Calu3 (cell line): ENCODE measurements at regions of chr3 and their contacts with region 1.

Region 1: GRCh38 chr3:112293368-112294321 is at the start of gene SLC9C1:
- DNase-seq: peak; percentile 63
- H3K4me3 Mint-ChIP-seq: peak within 1 kb of the TSS; percentile 71
- H3K27ac Mint-ChIP-seq: peak within 1 kb of the TSS; percentile 72
- H3K4me1 Mint-ChIP-seq: peaks cover 15% of the 10 kb centered on the region
- H3K27me3 Mint-ChIP-seq: no peaks in the 10 kb centered on the region
- CTCF ChIP-seq: no peak
- total RNA-seq, gene SLC9C1: not detected in 2 replicates

Region 2: DNA sequence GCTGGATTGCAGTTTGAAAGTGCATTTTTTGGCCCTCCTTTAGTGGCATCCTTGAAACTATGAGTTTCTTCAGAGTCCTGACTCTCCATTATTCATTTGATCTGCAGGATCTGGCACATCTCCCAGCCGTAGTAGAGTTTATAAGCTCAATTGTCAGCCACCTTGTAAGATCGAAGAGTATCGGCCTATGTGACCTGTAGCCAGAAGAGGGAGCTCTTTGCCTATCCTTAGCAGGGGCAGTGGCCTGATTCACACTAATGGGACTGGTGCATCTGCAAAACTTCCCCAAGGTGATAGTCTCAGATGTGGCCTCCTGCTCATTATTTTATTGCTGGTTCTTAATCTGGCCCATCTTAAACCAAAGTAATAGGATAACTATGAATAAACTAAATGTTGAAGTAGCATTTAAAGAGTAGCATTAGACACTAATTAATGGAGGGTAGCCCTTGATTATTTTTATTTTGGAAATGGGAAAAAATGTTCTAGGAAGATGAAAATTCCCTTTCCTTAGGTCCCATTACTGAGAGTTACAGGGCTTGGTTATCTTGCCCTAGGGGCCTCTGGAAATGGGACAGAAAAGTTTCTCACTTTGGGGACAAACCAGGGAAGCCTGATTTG is 181.8 kb before region 1 on chr3:
- CTCF ChIA-PET with region 1: interaction called, 11 read pairs
- intact Hi-C with region 1: loop called (anchors 1 kb)
- DNase-seq: peak; percentile 47
- H3K4me3 Mint-ChIP-seq: no peak overlapping the region
- H3K27ac Mint-ChIP-seq: no peak overlapping the region
- H3K4me1 Mint-ChIP-seq: no peaks in the 10 kb centered on the region
- H3K27me3 Mint-ChIP-seq: no peaks in the 10 kb centered on the region
- CTCF ChIP-seq: peak; percentile 37

Region 3: DNA sequence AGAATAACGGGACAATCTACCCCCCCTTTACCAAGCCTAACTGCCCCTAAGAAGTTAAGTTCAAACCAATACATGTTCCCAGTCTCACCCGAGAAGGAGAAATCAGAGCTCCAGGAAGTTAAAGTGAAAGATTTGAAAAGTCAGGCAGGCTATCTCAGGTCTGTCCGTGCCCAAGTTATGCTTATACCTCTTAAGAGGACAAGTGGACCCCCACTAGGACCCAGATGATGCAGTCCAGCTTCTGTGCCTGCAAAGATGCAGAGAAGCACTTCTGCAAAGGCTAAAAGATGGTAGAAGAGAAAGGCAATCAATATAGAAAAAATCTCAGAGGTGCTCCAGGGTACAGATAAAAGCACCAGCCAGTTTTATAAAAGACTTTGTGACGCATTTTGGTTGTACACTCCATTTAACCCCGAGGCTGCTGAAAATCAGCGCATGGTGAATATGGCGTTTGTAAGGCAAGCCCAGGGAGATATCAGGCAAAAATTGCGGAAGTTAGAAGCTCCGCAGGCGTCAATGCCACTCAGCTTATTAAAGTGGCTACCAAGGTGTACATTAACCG is 10.2 kb after region 1 on chr3:
- CTCF ChIA-PET with region 1: interaction called, 11 read pairs
- intact Hi-C with region 1: no loop called
- DNase-seq: no peak
- H3K4me3 Mint-ChIP-seq: no peak overlapping the region
- H3K27ac Mint-ChIP-seq: no peak overlapping the region
- H3K4me1 Mint-ChIP-seq: no peaks in the 10 kb centered on the region
- H3K27me3 Mint-ChIP-seq: no peaks in the 10 kb centered on the region
- CTCF ChIP-seq: no peak